ENCODE measurements at regions of chr1 and their contacts with region 1.

Region 1: DNA sequence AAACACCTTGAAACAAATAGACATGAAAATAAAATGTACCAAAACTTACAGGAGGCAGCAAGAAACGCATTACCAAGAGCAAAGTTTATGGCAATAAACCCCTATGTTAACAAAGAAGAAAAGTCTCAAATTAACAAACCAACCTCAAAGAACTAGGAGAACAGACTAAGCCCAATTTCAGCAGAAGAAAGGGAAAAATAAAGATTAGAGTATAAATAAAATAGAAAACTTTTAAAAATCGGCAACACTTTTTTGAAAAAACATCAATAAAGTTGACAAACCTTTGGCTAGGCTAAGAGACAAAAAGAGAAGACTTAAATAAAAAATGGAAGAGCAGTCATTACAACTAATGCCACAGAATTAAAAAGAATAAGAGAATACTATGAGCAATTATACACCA is 42.7 kb downstream of the SLC30A10 start:
- DNase-seq: no peak
- H3K4me3 ChIP-seq: no peak overlapping the region
- H3K27ac ChIP-seq: no peak overlapping the region
- H3K4me1 ChIP-seq: no peaks in the 10 kb centered on the region
- H3K27me3 ChIP-seq: no peaks in the 10 kb centered on the region
- CTCF ChIP-seq: no peak
- POLR2A ChIP-seq: no peak

Region 2: GRCh38 chr1:218742467-218743260 is 1143.0 kb before region 1 on chr1:
- intact Hi-C with region 1: loop called (anchors 5 kb)
- DNase-seq: no peak
- H3K4me3 ChIP-seq: no peak overlapping the region
- H3K27ac ChIP-seq: no peak overlapping the region
- H3K4me1 ChIP-seq: no peaks in the 10 kb centered on the region
- H3K27me3 ChIP-seq: no peaks in the 10 kb centered on the region
- CTCF ChIP-seq: no peak
- POLR2A ChIP-seq: no peak

Region 3: DNA sequence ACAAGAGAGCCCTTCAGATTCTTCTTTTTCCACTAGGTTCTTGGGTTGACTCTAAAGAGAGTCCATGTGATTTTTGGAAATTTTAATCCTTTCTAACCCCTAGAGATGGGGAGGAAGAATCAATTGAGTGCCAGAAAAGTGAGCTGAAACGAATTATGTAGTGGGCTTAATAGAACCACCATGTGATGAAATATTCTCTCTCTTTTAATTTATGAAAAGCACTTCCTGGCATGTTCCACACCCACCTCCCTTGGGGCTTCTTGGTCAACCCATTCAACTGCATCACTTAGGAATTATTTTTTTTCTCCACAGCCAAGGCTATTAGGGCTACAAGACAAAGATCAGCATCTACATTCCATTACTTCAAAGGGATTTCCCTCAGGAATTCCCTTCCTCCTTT is 352.4 kb before region 1 on chr1:
- intact Hi-C with region 1: no loop called
- DNase-seq: no peak
- H3K4me3 ChIP-seq: no peak overlapping the region
- H3K27ac ChIP-seq: no peak overlapping the region
- H3K4me1 ChIP-seq: no peaks in the 10 kb centered on the region
- H3K27me3 ChIP-seq: no peaks in the 10 kb centered on the region
- CTCF ChIP-seq: no peak
- POLR2A ChIP-seq: no peak

Region 4: DNA sequence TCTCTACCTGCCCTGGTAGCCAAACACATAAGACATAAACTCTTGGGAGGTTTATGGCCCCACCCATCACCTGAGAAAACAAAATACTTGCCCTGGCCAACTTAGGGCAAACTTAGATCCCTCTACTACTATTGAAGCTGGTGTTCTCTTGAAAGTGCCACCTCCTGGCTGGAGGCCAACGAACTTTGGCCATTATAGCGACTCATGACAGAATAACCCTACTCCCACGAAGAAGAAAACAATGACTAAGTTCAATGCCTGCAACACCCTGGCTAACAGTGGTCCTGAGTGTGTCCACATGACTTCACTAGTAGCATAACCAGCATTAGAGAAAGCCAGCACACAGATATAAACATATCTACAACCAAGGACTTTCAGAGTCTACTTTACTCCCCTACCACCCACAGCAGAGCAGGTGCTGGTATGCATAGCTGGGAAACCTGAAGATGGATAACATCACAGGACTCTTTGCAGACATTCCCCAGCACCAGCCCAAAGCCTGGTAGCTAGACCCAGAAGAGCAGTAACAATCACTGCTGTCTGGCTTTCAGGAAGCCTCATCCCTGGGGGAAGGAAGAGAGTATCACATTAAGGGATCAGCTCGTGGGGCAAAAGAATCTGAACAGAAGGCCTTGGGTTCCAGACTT is 38.3 kb before region 1 on chr1:
- intact Hi-C with region 1: no loop called
- DNase-seq: no peak
- H3K4me3 ChIP-seq: no peak overlapping the region
- H3K27ac ChIP-seq: no peak overlapping the region
- H3K4me1 ChIP-seq: no peaks in the 10 kb centered on the region
- H3K27me3 ChIP-seq: no peaks in the 10 kb centered on the region
- CTCF ChIP-seq: no peak
- POLR2A ChIP-seq: no peak

Region 5: GRCh38 chr1:220879076-220879508 is 993.4 kb after region 1 on chr1 and contains the start of gene HLX:
- intact Hi-C with region 1: no loop called
- DNase-seq: peak in 1 of 2 donors; percentile 76
- H3K4me3 ChIP-seq: peak within 1 kb of the TSS; percentile 83 to 87 (median 84)
- H3K27ac ChIP-seq: peak within 1 kb of the TSS; percentile 89 to 97
- H3K4me1 ChIP-seq: no peaks in the 10 kb centered on the region
- H3K27me3 ChIP-seq: peaks cover 0 to 6% of the 10 kb centered on the region in 2 donors
- CTCF ChIP-seq: no peak
- POLR2A ChIP-seq: peak; percentile 35
- total RNA-seq, gene HLX: 5.0 to 17.8 (median 15.1) TPM

Measured in breast epithelium (tissue), 4 donors.